CD4-positive, alpha-beta memory T cell (primary cell): ENCODE measurements at regions of chr12 and their contacts with region 1.

Region 1: DNA sequence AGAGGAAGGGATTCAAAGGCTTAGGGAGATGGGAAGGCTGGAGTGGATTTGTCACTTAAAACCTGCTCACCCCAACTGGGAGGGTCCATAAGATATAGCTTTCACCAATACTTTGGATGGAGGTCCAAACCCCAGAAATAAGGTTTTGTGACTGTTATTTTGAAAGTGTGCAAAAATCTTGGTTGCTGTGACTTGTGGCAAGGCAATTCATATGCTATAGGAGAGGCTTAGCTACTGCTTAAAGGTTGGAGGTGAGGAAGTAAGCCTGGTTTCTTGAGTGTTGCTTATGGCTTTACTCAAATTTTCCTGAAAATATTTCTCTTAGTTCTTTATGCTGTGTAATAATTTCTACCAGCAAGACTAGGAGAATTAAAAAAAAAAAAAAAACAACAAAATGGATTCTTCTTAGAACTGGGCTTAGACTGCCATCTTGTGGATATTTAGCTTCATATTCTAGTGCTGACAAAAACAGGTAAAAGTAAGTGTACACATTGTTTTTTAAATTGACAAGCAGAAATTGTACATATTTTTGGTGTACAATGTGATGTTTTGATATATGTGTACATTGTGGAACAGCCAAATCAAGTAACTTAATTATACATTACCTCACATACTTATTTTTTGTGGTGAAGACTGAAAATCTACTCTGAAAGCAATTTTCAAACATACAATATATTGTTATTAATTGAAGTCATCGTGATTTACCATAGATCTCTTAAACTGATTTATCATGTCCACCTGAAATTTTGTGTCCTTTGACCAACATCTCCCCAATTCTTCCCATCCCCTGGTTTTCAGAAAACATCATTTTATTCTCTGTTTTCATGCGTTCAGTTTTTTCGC is 23.0 kb downstream of the PDE6H start:
- DNase-seq: peak in 4 of 5 donors; percentile 59 to 74 (median 64)
- H3K4me3 ChIP-seq: no peak overlapping the region
- H3K4me3 Mint-ChIP-seq: peak overlapping the region in 3 of 8 donors; percentile 47 to 65 (median 64)
- H3K27ac ChIP-seq: no peak overlapping the region
- H3K27ac Mint-ChIP-seq: peak overlapping the region; percentile 8 to 89 (median 58)
- H3K4me1 ChIP-seq: peaks cover 24% of the 10 kb centered on the region
- H3K4me1 Mint-ChIP-seq: peaks cover 22 to 28% (median 25%) of the 10 kb centered on the region in 4 donors
- H3K27me3 ChIP-seq: peaks cover 3% of the 10 kb centered on the region
- H3K27me3 Mint-ChIP-seq: peaks cover 4 to 5% of the 10 kb centered on the region in 2 donors

Region 2: DNA sequence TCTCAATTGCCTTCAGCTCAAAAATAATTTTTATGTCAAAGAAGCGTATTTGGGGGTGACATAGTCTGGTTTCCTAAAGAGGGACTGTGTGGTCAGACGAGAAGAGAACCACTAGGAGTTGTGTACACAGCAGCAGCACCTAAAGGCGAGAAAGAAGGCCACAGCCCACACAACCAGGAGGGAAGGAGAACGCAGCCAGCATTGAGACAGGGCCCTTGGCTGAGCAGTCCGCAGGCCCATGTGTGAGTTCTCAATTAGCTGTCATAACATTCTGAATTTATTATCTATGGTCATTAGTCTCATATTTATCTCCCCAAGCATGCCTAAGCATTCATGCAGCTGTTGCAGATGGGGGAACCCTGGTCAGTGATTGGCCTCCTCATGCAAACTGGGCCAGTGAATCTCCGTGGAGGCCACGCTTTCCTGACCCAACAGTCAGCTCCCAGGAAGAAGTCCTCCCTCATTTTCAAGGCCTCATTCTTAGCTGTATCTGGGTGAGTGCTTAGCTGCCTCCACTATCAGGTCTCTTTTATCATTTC is 711.6 kb before region 1 on chr12:
- CTCF ChIA-PET with region 1: no interaction called
- POLR2A ChIA-PET with region 1: no interaction called
- intact Hi-C with region 1: no loop called
- DNase-seq: no peak
- H3K4me3 ChIP-seq: no peak overlapping the region
- H3K4me3 Mint-ChIP-seq: no peak overlapping the region
- H3K27ac ChIP-seq: no peak overlapping the region
- H3K27ac Mint-ChIP-seq: peak overlapping the region in 1 of 7 donors; percentile 48
- H3K4me1 ChIP-seq: no peaks in the 10 kb centered on the region
- H3K4me1 Mint-ChIP-seq: peaks cover 0 to 4% (median 0%) of the 10 kb centered on the region in 4 donors
- H3K27me3 ChIP-seq: no peaks in the 10 kb centered on the region
- H3K27me3 Mint-ChIP-seq: no peaks in the 10 kb centered on the region

Region 3: DNA sequence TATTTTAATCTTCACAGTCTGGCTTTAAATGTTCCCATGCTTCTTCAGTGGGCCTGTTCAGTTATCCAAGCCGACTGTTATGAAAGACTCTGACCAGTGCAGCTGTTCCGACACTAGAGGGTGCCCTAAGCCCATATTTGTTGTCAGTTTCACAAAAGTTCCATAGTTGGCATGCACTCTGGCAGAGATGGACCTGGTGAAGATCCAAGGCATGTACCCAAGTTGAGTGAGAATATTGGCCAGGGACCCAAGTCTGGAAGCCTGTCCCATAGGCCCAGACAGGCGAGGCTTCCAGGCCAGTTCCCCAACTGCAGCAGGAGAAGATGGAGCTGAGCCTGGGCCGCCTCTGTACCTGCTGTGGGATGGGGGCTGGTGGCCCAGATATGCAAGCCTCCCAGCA is 272.0 kb before region 1 on chr12:
- CTCF ChIA-PET with region 1: interaction called, 18 read pairs
- POLR2A ChIA-PET with region 1: no interaction called
- intact Hi-C with region 1: loop called (anchors 1 kb)
- DNase-seq: peak; percentile 49 to 66 (median 62)
- H3K4me3 ChIP-seq: no peak overlapping the region
- H3K4me3 Mint-ChIP-seq: no peak overlapping the region
- H3K27ac ChIP-seq: no peak overlapping the region
- H3K27ac Mint-ChIP-seq: peak overlapping the region in 1 of 7 donors; percentile 15
- H3K4me1 ChIP-seq: no peaks in the 10 kb centered on the region
- H3K4me1 Mint-ChIP-seq: peaks cover 0 to 3% (median 1%) of the 10 kb centered on the region in 4 donors
- H3K27me3 ChIP-seq: no peaks in the 10 kb centered on the region
- H3K27me3 Mint-ChIP-seq: peaks cover 5 to 6% of the 10 kb centered on the region in 2 donors

Region 4: GRCh38 chr12:14845350-14845750 is 150.5 kb before region 1 on chr12:
- CTCF ChIA-PET with region 1: interaction called, 191 read pairs
- POLR2A ChIA-PET with region 1: interaction called, 9 read pairs
- intact Hi-C with region 1: loop called (anchors 1 kb)
- DNase-seq: peak in 4 of 5 donors; percentile 50 to 59 (median 56)
- H3K4me3 ChIP-seq: no peak overlapping the region
- H3K4me3 Mint-ChIP-seq: peak overlapping the region in 1 of 8 donors; percentile 11
- H3K27ac ChIP-seq: no peak overlapping the region
- H3K27ac Mint-ChIP-seq: no peak overlapping the region
- H3K4me1 ChIP-seq: peaks cover 3% of the 10 kb centered on the region
- H3K4me1 Mint-ChIP-seq: peaks cover 0 to 5% (median 1%) of the 10 kb centered on the region in 4 donors
- H3K27me3 ChIP-seq: no peaks in the 10 kb centered on the region
- H3K27me3 Mint-ChIP-seq: no peaks in the 10 kb centered on the region

Region 5: DNA sequence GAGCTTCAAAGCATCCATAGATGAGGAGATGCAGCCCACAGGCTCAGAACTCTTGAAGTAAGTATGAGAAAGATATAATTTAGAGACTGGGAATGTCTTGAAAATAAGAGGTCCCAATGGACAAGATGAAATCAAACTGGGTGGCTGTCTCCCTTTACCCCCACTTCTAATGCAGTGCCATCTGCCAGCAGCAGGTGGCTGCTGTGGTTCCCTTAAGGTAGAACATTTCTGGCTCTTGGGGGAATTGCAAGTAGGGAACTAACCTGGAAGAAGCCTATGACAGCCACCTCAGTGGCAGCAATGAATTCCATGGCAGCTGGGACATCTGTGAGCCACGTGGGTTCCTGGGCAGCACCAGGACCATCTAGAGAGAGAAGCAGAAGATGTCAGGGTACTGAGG is 58.1 kb before region 1 on chr12:
- CTCF ChIA-PET with region 1: interaction called, 91 read pairs
- POLR2A ChIA-PET with region 1: interaction called, 12 read pairs
- intact Hi-C with region 1: loop called (anchors 1 kb)
- DNase-seq: peak in 1 of 5 donors; percentile 45
- H3K4me3 ChIP-seq: no peak overlapping the region
- H3K4me3 Mint-ChIP-seq: peak overlapping the region in 3 of 8 donors; percentile 7 to 20 (median 13)
- H3K27ac ChIP-seq: no peak overlapping the region
- H3K27ac Mint-ChIP-seq: peak overlapping the region; percentile 6 to 82 (median 65)
- H3K4me1 ChIP-seq: peaks cover 24% of the 10 kb centered on the region
- H3K4me1 Mint-ChIP-seq: peaks cover 33 to 59% (median 48%) of the 10 kb centered on the region in 4 donors
- H3K27me3 ChIP-seq: no peaks in the 10 kb centered on the region
- H3K27me3 Mint-ChIP-seq: no peaks in the 10 kb centered on the region

Region 6: GRCh38 chr12:14960548-14961465 is 35.0 kb before region 1 on chr12:
- CTCF ChIA-PET with region 1: interaction called, 12 read pairs
- POLR2A ChIA-PET with region 1: interaction called, 40 read pairs
- intact Hi-C with region 1: loop called (anchors 1 kb)
- DNase-seq: peak; percentile 72 to 78 (median 76)
- H3K4me3 ChIP-seq: peak overlapping the region; percentile 77 to 90
- H3K4me3 Mint-ChIP-seq: peak overlapping the region; percentile 96 to 100 (median 99)
- H3K27ac ChIP-seq: peak overlapping the region; percentile 92
- H3K27ac Mint-ChIP-seq: peak overlapping the region; percentile 97 to 99 (median 98)
- H3K4me1 ChIP-seq: peaks cover 64% of the 10 kb centered on the region
- H3K4me1 Mint-ChIP-seq: peaks cover 33 to 89% (median 48%) of the 10 kb centered on the region in 4 donors
- H3K27me3 ChIP-seq: no peaks in the 10 kb centered on the region
- H3K27me3 Mint-ChIP-seq: no peaks in the 10 kb centered on the region

Region 7: GRCh38 chr12:15220994-15221885 is 225.4 kb after region 1 on chr12 and contains the start of gene RERG:
- CTCF ChIA-PET with region 1: interaction called, 9 read pairs
- POLR2A ChIA-PET with region 1: no interaction called
- intact Hi-C with region 1: loop called (anchors 1 kb)
- DNase-seq: peak; percentile 42 to 74 (median 70)
- H3K4me3 ChIP-seq: peak within 1 kb of the TSS in 1 of 2 donors; percentile 27
- H3K4me3 Mint-ChIP-seq: peak within 1 kb of the TSS; percentile 60 to 83 (median 74)
- H3K27ac ChIP-seq: no peak within 1 kb of the TSS
- H3K27ac Mint-ChIP-seq: no peak within 1 kb of the TSS
- H3K4me1 ChIP-seq: peaks cover 10% of the 10 kb centered on the region
- H3K4me1 Mint-ChIP-seq: peaks cover 2 to 14% (median 8%) of the 10 kb centered on the region in 4 donors
- H3K27me3 ChIP-seq: peaks cover 6% of the 10 kb centered on the region
- H3K27me3 Mint-ChIP-seq: peaks cover 21 to 28% of the 10 kb centered on the region in 2 donors
- total RNA-seq, gene RERG: not detected